Upper lobe of right lung (tissue), 1 donor: ENCODE measurements at regions of chr17 and their contacts with region 1.

Region 1: GRCh38 chr17:40355804-40356758 is 8.5 kb downstream of the GJD3 start:
- DNase-seq: no peak
- ATAC-seq: no peak
- H3K4me3 ChIP-seq: no peak overlapping the region
- H3K27ac ChIP-seq: no peak overlapping the region
- H3K4me1 ChIP-seq: peaks cover 28% of the 10 kb centered on the region
- H3K27me3 ChIP-seq: no peaks in the 10 kb centered on the region
- CTCF ChIP-seq: no peak

Region 2: DNA sequence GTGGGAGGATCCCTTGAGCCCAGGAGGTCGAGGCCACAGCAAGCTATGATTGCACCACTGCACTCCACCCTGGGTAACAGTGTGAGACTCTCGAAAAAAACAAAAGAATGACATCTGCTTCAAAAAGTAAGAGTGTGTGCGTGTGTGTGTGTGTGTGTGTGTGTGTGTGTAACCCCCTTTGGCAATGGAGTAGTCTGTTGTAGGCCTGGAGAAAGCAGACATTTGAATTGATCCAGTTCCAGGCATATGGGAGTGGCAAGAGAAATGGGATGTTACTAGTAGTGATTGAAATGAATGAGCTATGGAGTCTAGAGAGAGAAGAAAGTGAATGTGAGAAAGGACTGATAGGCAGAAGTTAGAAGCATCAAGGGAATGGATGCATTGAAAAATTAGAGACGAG is 205.8 kb before region 1 on chr17:
- intact Hi-C with region 1: no loop called
- DNase-seq: no peak
- ATAC-seq: no peak
- H3K4me3 ChIP-seq: no peak overlapping the region
- H3K27ac ChIP-seq: no peak overlapping the region
- H3K4me1 ChIP-seq: peaks cover 7% of the 10 kb centered on the region
- H3K27me3 ChIP-seq: no peaks in the 10 kb centered on the region
- CTCF ChIP-seq: no peak

Region 3: GRCh38 chr17:40303009-40303657 is 52.9 kb before region 1 on chr17:
- intact Hi-C with region 1: loop called (anchors 2 kb)
- DNase-seq: no peak
- ATAC-seq: peak; percentile 87
- H3K4me3 ChIP-seq: no peak overlapping the region
- H3K27ac ChIP-seq: peak overlapping the region; percentile 39
- H3K4me1 ChIP-seq: peaks cover 46% of the 10 kb centered on the region
- H3K27me3 ChIP-seq: no peaks in the 10 kb centered on the region
- CTCF ChIP-seq: peak; percentile 81

Region 4: GRCh38 chr17:40474419-40475002 is 118.4 kb after region 1 on chr17:
- intact Hi-C with region 1: no loop called
- DNase-seq: no peak
- ATAC-seq: no peak
- H3K4me3 ChIP-seq: no peak overlapping the region
- H3K27ac ChIP-seq: no peak overlapping the region
- H3K4me1 ChIP-seq: peaks cover 5% of the 10 kb centered on the region
- H3K27me3 ChIP-seq: no peaks in the 10 kb centered on the region
- CTCF ChIP-seq: no peak